Heart left ventricle (tissue), 16 donors: ENCODE measurements at regions of chr14 and their contacts with region 1.

Region 1: GRCh38 chr14:35404449-35405303 is at the start of gene NFKBIA:
- DNase-seq: peak; percentile 92 to 96 (median 94)
- ATAC-seq: peak; percentile 56 to 78 (median 70)
- H3K4me3 ChIP-seq: peak within 1 kb of the TSS; percentile 77 to 98 (median 90)
- H3K27ac ChIP-seq: peak within 1 kb of the TSS; percentile 99 to 100 (median 100)
- H3K4me1 ChIP-seq: peaks cover 0 to 76% (median 55%) of the 10 kb centered on the region in 12 donors
- H3K27me3 ChIP-seq: no peaks in the 10 kb centered on the region
- CTCF ChIP-seq: peak in 10 of 12 donors; percentile 7 to 55 (median 34)
- POLR2A ChIP-seq: peak; percentile 81 to 99
- total RNA-seq, gene NFKBIA: 42.7 to 193 (median 68.5) TPM

Region 2: DNA sequence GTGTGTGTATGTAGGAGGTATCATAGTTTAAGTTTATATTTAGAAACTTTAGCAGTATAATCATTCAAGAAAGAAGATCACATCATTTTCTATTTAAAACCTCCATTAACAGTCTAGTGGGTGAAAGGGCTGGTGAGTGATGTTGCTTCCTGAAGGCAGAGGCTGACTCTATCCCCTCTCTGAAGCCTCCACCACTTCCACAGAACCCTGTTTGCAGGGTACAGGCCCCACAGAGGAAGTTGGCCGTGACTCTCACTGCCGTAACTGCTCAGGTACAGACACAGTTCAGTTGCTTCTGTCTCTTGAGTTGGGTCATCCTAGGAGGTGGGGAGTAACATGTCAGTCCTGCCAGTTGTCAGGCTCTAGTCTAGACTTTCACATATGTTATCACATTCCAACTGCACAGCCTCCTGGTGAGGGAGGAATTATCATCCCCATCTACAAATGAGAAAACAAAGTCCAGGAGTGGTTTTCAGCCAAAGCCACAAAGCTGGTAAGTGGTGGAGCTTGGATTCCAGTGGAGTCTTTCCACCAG is 721.8 kb before region 1 on chr14:
- intact Hi-C with region 1: loop called in 1 of 10 experiments (anchors 5 kb)
- DNase-seq: peak in 1 of 5 donors; percentile 30
- ATAC-seq: peak; percentile 73 to 94 (median 87)
- H3K4me3 ChIP-seq: peak overlapping the region in 2 of 12 donors; percentile 13 to 15
- H3K27ac ChIP-seq: peak overlapping the region in 6 of 12 donors; percentile 12 to 79 (median 58)
- H3K4me1 ChIP-seq: peaks cover 0 to 7% (median 0%) of the 10 kb centered on the region in 12 donors
- H3K27me3 ChIP-seq: peaks cover 0 to 5% (median 0%) of the 10 kb centered on the region in 9 donors
- CTCF ChIP-seq: no peak
- POLR2A ChIP-seq: no peak

Region 3: DNA sequence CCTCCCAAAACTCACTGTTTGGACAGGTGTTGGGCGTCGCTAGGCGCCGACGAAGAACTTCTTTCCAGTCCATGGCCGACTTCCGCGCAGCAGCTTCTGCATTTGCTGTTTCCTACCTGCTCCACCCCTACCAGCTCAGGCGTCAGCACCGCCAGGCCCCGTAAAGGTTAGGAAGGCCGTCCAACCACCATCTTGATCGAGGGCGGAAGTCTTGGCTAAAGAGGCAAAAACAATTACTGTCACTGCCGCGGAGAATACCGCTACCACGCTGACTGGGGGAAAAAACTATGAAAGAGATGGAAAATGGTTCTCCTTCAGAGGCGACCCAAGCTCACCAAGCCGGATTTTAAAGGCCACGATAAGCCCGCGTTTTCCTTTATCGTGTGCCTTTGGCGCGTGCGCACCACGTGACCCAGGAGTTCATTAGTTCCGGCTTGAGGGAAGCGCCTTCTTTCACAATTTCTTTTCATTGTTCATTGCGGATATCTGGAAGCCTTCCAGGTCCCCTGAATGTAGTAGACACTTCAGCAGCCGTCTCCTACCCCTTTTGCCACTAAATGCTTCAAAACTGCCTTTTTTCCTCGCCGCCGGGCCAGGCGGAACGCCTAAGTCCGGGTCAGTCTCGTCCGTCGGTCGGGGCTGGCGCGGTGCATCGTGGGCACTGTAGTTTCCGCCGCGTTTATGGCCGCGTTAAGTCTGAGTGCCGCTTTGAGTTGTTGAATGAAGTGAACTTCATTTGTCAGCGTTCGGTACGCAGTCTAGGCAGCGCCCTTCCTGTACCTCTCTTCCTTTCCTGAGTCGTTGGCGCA is 282.6 kb before region 1 on chr14 and contains the starts of genes PPP2R3C and PRORP:
- intact Hi-C with region 1: loop called in 3 of 10 experiments (anchors 5 to 10 kb)
- DNase-seq: peak; percentile 91 to 94 (median 92)
- ATAC-seq: peak; percentile 95 to 97 (median 96)
- H3K4me3 ChIP-seq: peak within 1 kb of the TSS; percentile 55 to 86 (median 68)
- H3K27ac ChIP-seq: peak within 1 kb of the TSS; percentile 91 to 100 (median 96)
- H3K4me1 ChIP-seq: peaks cover 0 to 53% (median 18%) of the 10 kb centered on the region in 12 donors
- H3K27me3 ChIP-seq: no peaks in the 10 kb centered on the region
- CTCF ChIP-seq: no peak
- POLR2A ChIP-seq: peak in 1 of 2 donors; percentile 60
- total RNA-seq, gene PPP2R3C: 15.2 to 37.3 (median 28.5) TPM
- total RNA-seq, gene PRORP: 18.0 to 25.8 (median 21.1) TPM

Region 4: DNA sequence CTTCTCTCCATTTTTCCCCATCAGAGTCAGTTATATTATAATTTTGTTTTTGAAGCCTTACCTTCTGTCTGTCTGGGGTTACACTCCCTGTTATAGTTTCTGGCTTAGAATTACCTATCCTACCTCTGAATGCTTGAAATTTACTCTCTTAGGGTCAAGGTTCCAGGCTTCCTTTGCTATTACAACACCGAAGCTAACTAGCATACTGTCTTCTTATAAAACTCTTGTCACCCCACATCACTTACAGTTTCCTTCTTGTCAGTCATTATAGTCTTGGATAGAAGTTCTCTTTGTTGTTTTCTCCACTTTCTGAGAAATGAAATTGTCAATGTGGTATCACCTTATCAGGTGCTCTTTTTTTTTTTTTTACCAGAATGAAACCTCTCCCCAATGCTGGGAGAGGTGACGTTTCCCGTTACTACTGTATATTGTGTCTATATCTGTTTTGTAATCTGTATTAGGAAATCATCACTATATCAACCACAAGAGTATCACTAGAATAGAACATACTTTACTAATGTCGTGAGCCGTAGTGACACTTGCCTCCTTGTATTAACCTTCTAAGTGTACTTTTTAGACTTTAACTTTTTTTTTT is 181.7 kb before region 1 on chr14:
- intact Hi-C with region 1: loop called in 5 of 10 experiments (anchors 2 to 5 kb)
- DNase-seq: no peak
- ATAC-seq: no peak
- H3K4me3 ChIP-seq: no peak overlapping the region
- H3K27ac ChIP-seq: no peak overlapping the region
- H3K4me1 ChIP-seq: peaks cover 0 to 16% (median 2%) of the 10 kb centered on the region in 12 donors
- H3K27me3 ChIP-seq: no peaks in the 10 kb centered on the region
- CTCF ChIP-seq: no peak
- POLR2A ChIP-seq: no peak

Region 5: DNA sequence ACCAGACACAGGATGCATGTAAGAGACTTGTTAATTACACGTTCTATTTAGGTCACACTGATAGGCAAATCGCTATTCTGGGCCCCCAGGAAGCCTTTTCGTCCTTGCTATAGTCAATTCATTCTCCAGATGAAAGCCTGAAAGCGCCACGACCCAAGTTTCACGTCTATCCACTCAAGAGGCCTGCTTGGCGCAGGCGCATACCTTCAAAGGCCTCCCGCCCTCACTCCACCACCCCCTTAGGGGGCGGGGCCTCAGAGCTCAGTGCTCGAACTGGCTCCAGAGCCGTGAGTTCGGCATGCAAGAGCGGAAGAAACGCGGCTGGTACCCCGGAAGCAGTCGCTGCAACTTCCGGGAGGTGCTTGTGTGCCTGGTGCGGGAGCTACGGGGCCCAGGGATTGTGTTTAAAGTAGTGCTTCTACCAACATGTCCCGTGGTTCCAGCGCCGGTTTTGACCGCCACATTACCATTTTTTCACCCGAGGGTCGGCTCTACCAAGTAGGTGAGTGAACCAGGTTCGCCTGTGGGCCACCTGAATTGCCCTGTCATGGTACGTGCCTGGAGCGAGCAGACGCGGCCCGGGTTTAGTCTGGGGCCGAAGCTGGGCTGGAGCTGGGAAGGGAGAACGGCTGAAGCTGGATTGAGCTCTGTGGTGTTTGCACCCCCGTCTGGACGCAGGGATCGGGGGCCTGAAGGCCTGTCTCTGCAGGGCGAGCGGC is 112.5 kb before region 1 on chr14 and contains the start of gene PSMA6:
- intact Hi-C with region 1: loop called (anchors 1 to 5 kb)
- DNase-seq: peak; percentile 99 to 100 (median 99)
- ATAC-seq: peak; percentile 99 to 100 (median 100)
- H3K4me3 ChIP-seq: peak within 1 kb of the TSS; percentile 69 to 97 (median 88)
- H3K27ac ChIP-seq: peak within 1 kb of the TSS; percentile 60 to 96 (median 90)
- H3K4me1 ChIP-seq: peaks cover 0 to 60% (median 39%) of the 10 kb centered on the region in 12 donors
- H3K27me3 ChIP-seq: no peaks in the 10 kb centered on the region
- CTCF ChIP-seq: peak in 1 of 12 donors; percentile 10
- POLR2A ChIP-seq: peak in 1 of 2 donors; percentile 79
- total RNA-seq, gene PSMA6: 146 to 230 (median 176) TPM

Region 6: GRCh38 chr14:35385042-35385839 is 19.4 kb before region 1 on chr14:
- intact Hi-C with region 1: loop called in 2 of 10 experiments (anchors 1 kb)
- DNase-seq: peak; percentile 85 to 91 (median 87)
- ATAC-seq: peak; percentile 95 to 96 (median 95)
- H3K4me3 ChIP-seq: no peak overlapping the region
- H3K27ac ChIP-seq: peak overlapping the region; percentile 61 to 95 (median 84)
- H3K4me1 ChIP-seq: peaks cover 9 to 37% (median 27%) of the 10 kb centered on the region in 12 donors
- H3K27me3 ChIP-seq: no peaks in the 10 kb centered on the region
- CTCF ChIP-seq: no peak
- POLR2A ChIP-seq: peak in 1 of 2 donors; percentile 39